PC-3 (cell line): ENCODE measurements at regions of chr1 and their contacts with region 1.

Region 1: DNA sequence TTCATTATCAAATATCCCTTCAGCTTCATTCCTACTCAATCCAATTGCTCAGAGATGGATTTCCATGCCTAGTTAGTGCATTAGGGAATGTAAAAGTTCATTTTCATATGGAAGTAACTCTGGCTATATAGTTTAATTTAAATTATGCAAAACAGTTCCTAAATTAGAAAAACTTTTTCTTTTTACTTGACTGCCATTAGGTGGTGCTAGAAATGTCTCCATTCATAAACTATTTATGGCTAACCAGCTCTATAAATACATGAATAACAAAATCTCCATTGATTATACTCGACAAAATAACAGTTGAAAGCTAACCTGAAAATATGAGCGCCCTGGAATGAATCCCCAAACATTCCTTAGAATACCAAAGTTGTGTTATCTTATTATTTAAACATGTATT is 311.4 kb downstream of the USH2A start:
- DNase-seq: peak; percentile 29
- ATAC-seq: peak; percentile 46; the same call in 1 of the 2 replicates
- H3K4me3 ChIP-seq: no peak overlapping the region
- H3K27ac ChIP-seq: no peak overlapping the region
- H3K4me1 ChIP-seq: no peaks in the 10 kb centered on the region
- H3K27me3 ChIP-seq: peaks cover 38% of the 10 kb centered on the region
- CTCF ChIP-seq: peak; percentile 80

Region 2: DNA sequence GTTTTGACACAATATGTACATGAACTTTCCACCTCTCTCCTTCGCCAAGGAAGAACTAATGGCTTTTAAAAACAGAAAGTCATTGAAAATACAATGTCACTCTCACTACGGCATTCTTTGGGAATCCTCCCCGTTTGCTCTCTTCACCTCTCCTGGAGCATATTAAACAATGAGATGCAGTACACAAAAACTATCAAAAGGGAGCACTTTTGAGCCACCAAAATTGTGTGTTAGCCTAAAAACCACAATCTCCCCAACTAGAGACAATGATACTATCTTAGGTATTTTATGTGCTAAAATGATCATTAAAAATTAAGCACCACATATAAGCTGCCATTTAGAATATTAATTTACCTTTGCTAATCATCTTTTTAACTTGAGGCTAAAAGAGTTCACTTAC is 119.2 kb before region 1 on chr1:
- CTCF ChIA-PET with region 1: no interaction called
- POLR2A ChIA-PET with region 1: no interaction called
- intact Hi-C with region 1: loop called (anchors 2 kb)
- DNase-seq: peak; percentile 72
- ATAC-seq: peak; percentile 82
- H3K4me3 ChIP-seq: no peak overlapping the region
- H3K27ac ChIP-seq: no peak overlapping the region
- H3K4me1 ChIP-seq: no peaks in the 10 kb centered on the region
- H3K27me3 ChIP-seq: peaks cover 58% of the 10 kb centered on the region
- CTCF ChIP-seq: peak; percentile 83

Region 3: GRCh38 chr1:216175714-216176113 is 63.9 kb after region 1 on chr1:
- CTCF ChIA-PET with region 1: no interaction called
- POLR2A ChIA-PET with region 1: no interaction called
- intact Hi-C with region 1: no loop called
- DNase-seq: peak; percentile 20
- ATAC-seq: peak; percentile 60; the same call in 1 of the 2 replicates
- H3K4me3 ChIP-seq: no peak overlapping the region
- H3K27ac ChIP-seq: no peak overlapping the region
- H3K4me1 ChIP-seq: no peaks in the 10 kb centered on the region
- H3K27me3 ChIP-seq: peaks cover 68% of the 10 kb centered on the region
- CTCF ChIP-seq: peak; percentile 32; the same call in 1 of the 2 replicates

Region 4: GRCh38 chr1:216193839-216194439 is 82.1 kb after region 1 on chr1:
- CTCF ChIA-PET with region 1: interaction called, 10 read pairs
- POLR2A ChIA-PET with region 1: no interaction called
- intact Hi-C with region 1: no loop called
- DNase-seq: peak; percentile 57
- ATAC-seq: peak; percentile 91
- H3K4me3 ChIP-seq: no peak overlapping the region
- H3K27ac ChIP-seq: no peak overlapping the region
- H3K4me1 ChIP-seq: no peaks in the 10 kb centered on the region
- H3K27me3 ChIP-seq: peaks cover 33% of the 10 kb centered on the region
- CTCF ChIP-seq: peak; percentile 61

Region 5: GRCh38 chr1:216566641-216567205 is 454.9 kb after region 1 on chr1:
- CTCF ChIA-PET with region 1: interaction called, 4 read pairs
- POLR2A ChIA-PET with region 1: no interaction called
- intact Hi-C with region 1: loop called (anchors 1 kb)
- DNase-seq: peak; percentile 82
- ATAC-seq: peak; percentile 85
- H3K4me3 ChIP-seq: no peak overlapping the region
- H3K27ac ChIP-seq: no peak overlapping the region
- H3K4me1 ChIP-seq: no peaks in the 10 kb centered on the region
- H3K27me3 ChIP-seq: peaks cover 27% of the 10 kb centered on the region
- CTCF ChIP-seq: peak; percentile 95

Region 6: GRCh38 chr1:216723274-216723780 is 611.5 kb after region 1 on chr1 and contains the start of gene ESRRG:
- CTCF ChIA-PET with region 1: no interaction called
- POLR2A ChIA-PET with region 1: no interaction called
- intact Hi-C with region 1: loop called (anchors 5 kb)
- DNase-seq: no peak
- ATAC-seq: peak; percentile 87
- H3K4me3 ChIP-seq: peak within 1 kb of the TSS; percentile 23
- H3K27ac ChIP-seq: no peak within 1 kb of the TSS
- H3K4me1 ChIP-seq: no peaks in the 10 kb centered on the region
- H3K27me3 ChIP-seq: peaks cover 98% of the 10 kb centered on the region
- CTCF ChIP-seq: no peak
- total RNA-seq, gene ESRRG: 1.1 and 1.7 TPM in 2 replicates